Activated CD4-positive, alpha-beta T cell treated with anti-CD3 and anti-CD28 coated beads, Interleukin-2, amount 10 ng/mL, durations not matched to agents 7 days and 5 days (primary cell): ENCODE measurements at regions of chr1 and their contacts with region 1.

Region 1: GRCh38 chr1:165894591-165894990 is 67.2 kb downstream of the UCK2 start:
- DNase-seq: no peak
- H3K4me3 Mint-ChIP-seq: no peak overlapping the region
- H3K27ac Mint-ChIP-seq: no peak overlapping the region
- H3K4me1 Mint-ChIP-seq: peaks cover 10% of the 10 kb centered on the region
- H3K27me3 Mint-ChIP-seq: no peaks in the 10 kb centered on the region

Region 2: GRCh38 chr1:165875171-165875570 is 19.4 kb before region 1 on chr1:
- CTCF ChIA-PET with region 1: no interaction called
- POLR2A ChIA-PET with region 1: interaction called, 10 read pairs
- DNase-seq: no peak
- H3K4me3 Mint-ChIP-seq: no peak overlapping the region
- H3K27ac Mint-ChIP-seq: no peak overlapping the region
- H3K4me1 Mint-ChIP-seq: peaks cover 50% of the 10 kb centered on the region
- H3K27me3 Mint-ChIP-seq: no peaks in the 10 kb centered on the region

Region 3: GRCh38 chr1:166221316-166221715 is 326.7 kb after region 1 on chr1:
- CTCF ChIA-PET with region 1: no interaction called
- POLR2A ChIA-PET with region 1: no interaction called
- DNase-seq: no peak
- H3K4me3 Mint-ChIP-seq: no peak overlapping the region
- H3K27ac Mint-ChIP-seq: no peak overlapping the region
- H3K4me1 Mint-ChIP-seq: no peaks in the 10 kb centered on the region
- H3K27me3 Mint-ChIP-seq: no peaks in the 10 kb centered on the region